PC-9 (cell line): ENCODE measurements at regions of chr7 and their contacts with region 1.

Region 1: DNA sequence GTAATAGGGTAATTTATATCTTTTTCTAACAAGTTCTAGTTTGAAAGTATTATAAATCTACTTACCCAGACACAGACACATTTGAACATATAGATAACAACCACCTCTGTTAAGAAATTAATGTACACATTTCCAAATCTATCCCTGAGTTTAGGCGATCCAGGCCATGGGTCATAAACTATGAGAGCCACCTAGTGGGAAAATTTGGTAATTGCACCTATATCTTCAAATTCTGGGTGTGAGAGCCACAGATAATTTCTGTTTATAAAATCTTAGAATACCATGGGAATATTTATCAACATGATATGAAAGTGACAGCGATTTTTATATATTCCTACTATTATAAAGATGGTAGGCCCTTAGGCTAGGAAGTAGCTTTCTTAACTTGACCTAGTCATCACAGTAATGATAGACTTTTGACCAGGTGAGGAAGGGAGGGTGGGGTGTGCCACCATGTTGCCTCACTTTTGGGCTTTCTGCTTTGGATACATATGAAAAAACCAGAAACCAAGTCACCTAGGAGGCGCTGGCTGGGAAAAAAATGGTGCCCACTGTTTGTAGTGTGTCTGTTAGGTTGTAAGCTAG is 8.0 kb upstream of the EPHA1 start:
- DNase-seq: peak in 1 of 2 experiments; percentile 49
- H3K4me3 ChIP-seq: no peak overlapping the region
- H3K27ac ChIP-seq: no peak overlapping the region
- H3K4me1 ChIP-seq: peaks cover 6% of the 10 kb centered on the region
- H3K27me3 ChIP-seq: no peaks in the 10 kb centered on the region
- CTCF ChIP-seq: peak; percentile 95

Region 2: GRCh38 chr7:143458263-143458662 is 41.6 kb after region 1 on chr7:
- CTCF ChIA-PET with region 1: no interaction called
- POLR2A ChIA-PET with region 1: no interaction called
- intact Hi-C with region 1: loop called (anchors 5 kb)
- DNase-seq: peak in 1 of 2 experiments; percentile 8
- H3K4me3 ChIP-seq: no peak overlapping the region
- H3K27ac ChIP-seq: no peak overlapping the region
- H3K4me1 ChIP-seq: peaks cover 12% of the 10 kb centered on the region
- H3K27me3 ChIP-seq: no peaks in the 10 kb centered on the region
- CTCF ChIP-seq: no peak